ENCODE measurements at regions of chrX and their contacts with region 1.

Region 1: GRCh38 chrX:150683536-150684146 is 9.6 kb upstream of the MTMR1 start:
- H3K4me3 ChIP-seq: no peak overlapping the region
- H3K27ac ChIP-seq: no peak overlapping the region
- H3K4me1 ChIP-seq: no peaks in the 10 kb centered on the region
- CTCF ChIP-seq: no peak

Region 2: DNA sequence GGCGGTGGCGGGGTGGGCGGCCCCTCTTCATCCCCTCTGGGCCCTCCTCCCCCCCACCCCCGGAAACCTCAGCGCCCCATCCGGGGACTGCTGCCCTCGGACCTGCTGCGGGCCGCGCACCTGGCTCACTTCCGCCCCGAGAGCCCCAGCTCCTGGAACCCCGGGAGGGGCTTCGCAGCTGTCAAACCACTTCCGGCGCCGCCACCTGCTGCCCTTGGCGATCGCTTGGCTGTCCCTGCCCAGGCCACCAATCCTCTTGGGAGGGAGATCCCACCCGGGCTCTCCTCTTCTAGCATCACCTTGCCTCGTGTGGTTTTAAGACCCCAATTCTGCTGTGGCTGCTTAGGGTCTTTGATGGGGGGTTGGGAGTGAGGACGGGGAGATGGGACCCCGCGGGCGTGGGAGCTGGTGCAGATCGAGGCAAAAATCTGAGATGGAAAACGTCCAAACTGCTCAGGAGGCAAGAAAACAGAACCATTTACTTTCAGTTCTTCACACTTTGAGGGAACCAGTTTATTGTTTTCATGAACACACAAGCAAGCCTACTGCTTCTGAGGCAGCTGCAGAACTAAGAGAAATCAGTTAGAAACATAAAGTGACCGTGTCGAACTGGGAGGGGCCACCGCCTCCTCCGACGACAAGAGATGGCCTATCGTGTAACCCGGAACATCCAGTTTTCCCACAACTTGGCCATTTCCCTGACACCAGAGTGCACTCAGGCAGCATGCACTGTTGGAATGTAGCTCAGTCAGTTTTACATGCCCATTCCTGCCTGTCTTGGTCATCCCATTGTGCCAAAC is 10.3 kb after region 1 on chrX:
- CTCF ChIA-PET with region 1: interaction called, 20 read pairs
- POLR2A ChIA-PET with region 1: interaction called, 4 read pairs
- H3K4me3 ChIP-seq: peak overlapping the region; percentile 35
- H3K27ac ChIP-seq: peak overlapping the region; percentile 75; the same call in 1 of the 2 replicates
- H3K4me1 ChIP-seq: no peaks in the 10 kb centered on the region; the same call in 1 of the 2 replicates
- CTCF ChIP-seq: no peak

Region 3: DNA sequence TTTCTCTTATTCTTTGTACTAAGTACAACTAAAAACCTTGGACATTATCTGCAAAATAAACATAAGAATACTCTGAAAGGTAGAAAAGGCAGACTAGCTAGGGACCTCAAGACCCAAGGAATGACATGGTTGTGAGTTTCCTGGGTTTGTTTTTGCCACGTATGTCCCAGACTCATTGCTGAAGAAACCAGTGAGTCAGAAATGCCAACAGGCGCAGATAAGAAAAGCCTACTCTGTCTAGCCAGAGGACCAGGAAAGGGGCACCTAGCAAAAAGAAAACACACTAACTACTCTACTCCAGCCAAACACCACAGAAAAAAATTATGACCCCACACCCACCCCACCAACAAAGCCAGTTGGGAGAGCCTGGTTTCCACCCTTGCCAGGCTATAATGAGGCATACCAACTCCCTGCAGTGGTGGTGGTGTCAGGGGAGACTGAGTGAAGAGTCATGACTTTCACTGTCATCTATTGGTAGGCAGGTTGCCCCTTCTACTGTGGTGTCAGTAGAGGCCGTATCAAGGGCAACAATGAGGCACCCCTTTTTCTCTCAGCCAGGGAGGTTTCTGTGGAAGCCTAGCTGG is 20.5 kb after region 1 on chrX:
- CTCF ChIA-PET with region 1: interaction called, 17 read pairs
- POLR2A ChIA-PET with region 1: no interaction called
- H3K4me3 ChIP-seq: no peak overlapping the region
- H3K27ac ChIP-seq: no peak overlapping the region
- H3K4me1 ChIP-seq: no peaks in the 10 kb centered on the region
- CTCF ChIP-seq: no peak

Region 4: DNA sequence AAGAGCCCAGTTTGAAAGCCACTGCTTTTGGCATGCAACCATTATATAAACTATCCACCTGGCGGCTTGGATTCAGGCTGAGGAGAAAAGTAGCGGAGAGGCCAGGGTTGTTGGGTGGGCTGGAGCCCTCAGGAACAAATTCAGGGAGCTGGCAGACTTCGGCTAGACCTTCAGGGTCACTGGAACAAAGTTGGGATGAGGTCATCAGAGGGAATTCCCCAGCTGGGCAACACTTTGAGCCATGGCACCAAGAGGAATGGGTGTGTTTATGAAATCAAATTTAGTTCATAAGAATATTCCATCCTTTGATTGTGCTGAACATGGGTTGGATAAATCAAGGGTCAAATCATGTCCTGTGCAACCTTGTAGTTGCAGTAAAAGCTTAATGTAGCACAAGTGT is 31.5 kb after region 1 on chrX:
- CTCF ChIA-PET with region 1: interaction called, 58 read pairs
- POLR2A ChIA-PET with region 1: no interaction called
- H3K4me3 ChIP-seq: no peak overlapping the region
- H3K27ac ChIP-seq: no peak overlapping the region
- H3K4me1 ChIP-seq: no peaks in the 10 kb centered on the region
- CTCF ChIP-seq: no peak

Region 5: DNA sequence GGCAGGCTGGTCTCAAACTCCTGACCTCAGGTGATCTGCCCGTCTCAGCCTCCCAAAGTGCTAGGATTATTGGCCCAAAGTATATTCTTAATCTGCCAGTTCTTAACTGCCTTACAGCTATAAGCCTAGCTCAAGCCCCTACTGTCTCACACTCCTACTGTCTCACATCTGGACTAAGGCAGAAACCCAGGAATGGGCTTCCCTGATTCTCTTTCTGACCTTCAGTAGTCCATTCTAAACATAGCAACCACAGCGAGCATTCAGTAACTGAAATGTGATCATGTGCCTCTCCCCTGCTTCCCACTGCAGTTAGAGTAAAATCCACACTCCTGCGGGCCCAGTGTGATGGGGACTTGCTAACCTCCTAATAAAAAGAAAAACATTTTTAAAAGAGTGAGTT is 68.5 kb after region 1 on chrX:
- CTCF ChIA-PET with region 1: no interaction called
- POLR2A ChIA-PET with region 1: no interaction called
- H3K4me3 ChIP-seq: no peak overlapping the region
- H3K27ac ChIP-seq: no peak overlapping the region
- H3K4me1 ChIP-seq: no peaks in the 10 kb centered on the region
- CTCF ChIP-seq: no peak

Region 6: DNA sequence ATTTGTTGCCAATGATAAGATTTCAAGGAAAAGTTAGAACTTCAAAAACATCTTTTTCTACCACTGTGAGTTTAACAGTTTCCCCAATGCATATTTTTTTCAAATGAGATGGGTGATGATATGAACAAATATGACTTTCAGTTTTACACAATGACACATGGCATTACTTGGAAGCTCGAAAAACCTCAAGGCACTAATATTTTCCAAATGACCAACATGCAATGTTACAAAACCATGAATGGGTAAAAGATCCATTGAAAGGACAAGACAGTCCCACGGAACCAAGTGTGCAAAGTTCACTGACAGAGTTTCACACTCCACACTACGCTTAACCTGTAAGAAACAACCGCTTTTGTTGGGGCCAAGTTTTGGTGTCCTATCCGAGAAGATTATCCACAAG is 130.3 kb after region 1 on chrX:
- CTCF ChIA-PET with region 1: no interaction called
- POLR2A ChIA-PET with region 1: no interaction called
- H3K4me3 ChIP-seq: no peak overlapping the region
- H3K27ac ChIP-seq: no peak overlapping the region
- H3K4me1 ChIP-seq: no peaks in the 10 kb centered on the region
- CTCF ChIP-seq: no peak

Region 7: DNA sequence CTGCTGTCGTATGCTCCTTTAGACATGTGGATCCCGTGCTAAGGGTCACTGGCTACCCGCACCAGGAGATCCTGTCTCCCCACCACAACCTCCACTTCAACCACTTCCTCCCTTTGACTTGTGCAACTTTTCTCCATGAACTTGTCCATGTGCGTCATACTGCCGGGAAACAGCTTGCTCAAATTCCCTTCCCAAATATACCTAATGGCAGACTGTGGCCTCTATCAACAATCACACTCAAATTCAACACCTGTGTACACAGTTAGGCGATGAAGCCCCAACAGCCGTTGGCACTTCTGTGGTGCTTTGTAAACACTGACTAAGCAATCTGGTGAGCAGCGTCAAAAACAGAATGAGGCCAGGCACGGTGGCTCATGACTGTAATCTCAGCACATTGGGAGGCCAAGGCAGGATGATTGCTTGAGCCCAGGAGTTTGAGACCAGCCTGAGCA is 165.3 kb after region 1 on chrX:
- CTCF ChIA-PET with region 1: no interaction called
- POLR2A ChIA-PET with region 1: no interaction called
- H3K4me3 ChIP-seq: no peak overlapping the region
- H3K27ac ChIP-seq: no peak overlapping the region
- H3K4me1 ChIP-seq: no peaks in the 10 kb centered on the region
- CTCF ChIP-seq: no peak

Measured in HEK293 (cell line).